ENCODE measurements at regions of chr9 and their contacts with region 1.

Region 1: GRCh38 chr9:127214421-127215267 is 49.9 kb upstream of the GARNL3 start:
- DNase-seq: peak in 1 of 2 donors; percentile 84
- ATAC-seq: no peak
- H3K4me3 ChIP-seq: no peak overlapping the region
- H3K27ac ChIP-seq: no peak overlapping the region
- H3K4me1 ChIP-seq: no peaks in the 10 kb centered on the region
- H3K27me3 ChIP-seq: no peaks in the 10 kb centered on the region

Region 2: DNA sequence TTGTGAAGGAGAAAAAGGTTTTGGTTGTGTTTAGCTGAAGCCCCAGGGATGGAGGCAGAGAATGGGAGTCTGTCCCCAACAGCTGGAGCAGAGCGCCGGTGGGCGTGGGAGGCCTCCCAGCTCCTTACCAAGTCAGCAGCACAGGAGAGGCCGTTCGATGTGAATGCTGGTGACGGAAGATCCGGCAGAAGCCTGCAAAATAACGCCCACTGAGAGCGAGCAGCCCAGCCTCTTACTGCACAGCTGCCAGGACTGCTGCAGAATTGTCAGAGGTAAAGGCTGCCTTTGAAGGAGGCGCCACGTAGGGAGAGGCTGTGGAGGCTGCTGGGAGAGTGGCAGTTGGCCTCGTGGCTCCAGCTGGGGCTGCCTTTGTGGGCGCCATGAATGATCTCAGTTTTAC is 118.4 kb before region 1 on chr9:
- intact Hi-C with region 1: no loop called
- DNase-seq: no peak
- ATAC-seq: no peak
- H3K4me3 ChIP-seq: no peak overlapping the region
- H3K27ac ChIP-seq: no peak overlapping the region
- H3K4me1 ChIP-seq: no peaks in the 10 kb centered on the region
- H3K27me3 ChIP-seq: no peaks in the 10 kb centered on the region

Region 3: DNA sequence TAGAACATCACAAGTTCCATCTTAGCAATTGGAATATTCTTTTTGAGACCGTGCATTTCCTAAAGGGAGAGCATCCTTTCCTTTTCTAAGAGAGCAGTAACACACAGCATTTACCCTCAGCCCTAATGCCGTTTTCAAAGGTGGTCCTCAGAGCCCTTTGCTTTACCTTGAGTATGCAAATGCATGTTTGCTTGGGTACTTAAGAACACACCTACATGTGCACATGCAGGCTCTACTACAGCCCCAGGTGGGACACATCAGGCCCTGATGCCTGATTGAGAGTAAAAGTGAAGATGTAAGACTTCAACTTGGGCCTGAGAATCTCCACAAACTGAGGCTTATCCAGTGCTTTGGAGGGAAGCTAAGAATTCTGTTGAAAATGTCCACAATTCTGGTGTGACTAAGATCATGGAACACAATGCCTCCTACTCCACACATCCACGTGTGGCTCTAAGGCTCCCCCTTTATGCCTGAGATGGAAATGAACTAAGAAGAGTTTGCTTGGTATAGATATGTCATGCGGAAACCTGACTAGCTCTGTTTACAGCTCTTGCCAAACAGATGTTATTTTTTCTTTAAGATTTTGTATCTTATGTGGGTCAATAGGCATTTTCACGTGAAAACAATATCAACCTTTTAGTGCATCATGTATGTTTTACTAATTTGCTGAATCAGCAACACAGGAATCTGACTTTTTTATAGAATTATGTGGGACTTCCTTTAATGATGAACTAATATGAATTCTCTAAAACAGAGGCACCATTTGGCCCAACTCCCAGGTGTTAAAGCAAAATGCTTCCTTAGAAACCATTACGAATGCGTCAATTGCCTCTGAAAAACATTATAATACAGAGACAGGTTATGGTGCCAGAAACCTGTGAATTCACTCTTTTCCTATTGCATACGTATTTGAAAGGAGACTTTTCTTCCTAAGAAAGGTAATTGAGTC is 133.5 kb after region 1 on chr9:
- intact Hi-C with region 1: loop called (anchors 5 kb)
- DNase-seq: no peak
- ATAC-seq: peak; percentile 71
- H3K4me3 ChIP-seq: no peak overlapping the region
- H3K27ac ChIP-seq: no peak overlapping the region
- H3K4me1 ChIP-seq: peaks cover 0 to 2% of the 10 kb centered on the region in 2 donors
- H3K27me3 ChIP-seq: no peaks in the 10 kb centered on the region

Region 4: GRCh38 chr9:127396808-127397497 is 182.3 kb after region 1 on chr9 and contains the start of gene SLC2A8:
- intact Hi-C with region 1: loop called (anchors 2 kb)
- DNase-seq: peak; percentile 99
- ATAC-seq: peak; percentile 98
- H3K4me3 ChIP-seq: peak within 1 kb of the TSS; percentile 58 to 66
- H3K27ac ChIP-seq: peak within 1 kb of the TSS; percentile 5 to 58
- H3K4me1 ChIP-seq: no peaks in the 10 kb centered on the region
- H3K27me3 ChIP-seq: no peaks in the 10 kb centered on the region
- total RNA-seq, gene SLC2A8: 15.3 to 21.0 TPM

Region 5: DNA sequence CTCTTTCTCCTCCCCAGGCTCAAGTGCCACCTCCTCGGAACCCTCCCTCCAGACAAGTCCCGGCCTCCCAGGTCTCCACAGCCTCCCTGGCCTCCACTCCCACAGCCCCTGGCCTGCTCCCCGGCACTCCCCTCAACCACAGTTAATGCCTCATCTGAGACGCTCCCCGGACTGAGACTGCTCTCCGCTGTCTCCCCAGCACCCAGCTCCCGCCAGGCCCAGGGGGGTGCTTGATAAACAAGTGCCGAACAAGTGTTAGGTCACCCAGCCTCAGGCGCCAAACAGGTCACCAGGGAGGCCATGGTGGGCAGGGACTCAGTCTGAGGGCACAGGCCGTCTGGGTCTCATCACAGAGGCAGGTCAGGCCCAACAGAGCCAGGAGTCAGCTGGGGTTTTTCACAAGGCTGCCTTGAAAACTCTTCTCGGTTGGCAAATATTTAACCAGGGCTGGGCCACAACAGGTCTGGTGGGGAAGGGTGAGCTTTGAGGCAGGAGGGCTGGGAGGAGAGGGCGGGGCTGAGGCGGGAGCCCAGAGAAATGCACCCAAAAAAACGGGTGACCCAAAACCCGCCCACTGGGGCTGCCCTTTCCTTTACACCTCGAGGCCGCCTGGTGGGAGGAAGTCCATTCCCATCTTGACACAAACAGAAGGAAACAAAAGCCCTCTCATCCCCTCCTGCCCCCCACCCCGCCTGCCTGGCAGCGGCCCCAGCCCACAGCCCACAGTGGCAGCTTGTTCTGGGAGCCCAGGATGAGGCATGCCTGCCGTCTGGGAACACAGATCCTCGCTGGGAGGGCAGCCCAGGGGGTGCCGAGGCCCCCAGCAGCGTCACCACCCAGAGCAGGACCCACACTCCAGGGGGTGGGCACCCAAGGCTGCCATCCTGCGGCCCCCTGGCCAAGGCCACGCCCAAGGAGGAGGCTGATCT is 330.8 kb after region 1 on chr9:
- intact Hi-C with region 1: no loop called
- DNase-seq: peak in 1 of 2 donors; percentile 80
- ATAC-seq: peak; percentile 3
- H3K4me3 ChIP-seq: no peak overlapping the region
- H3K27ac ChIP-seq: peak overlapping the region in 1 of 2 donors; percentile 36
- H3K4me1 ChIP-seq: no peaks in the 10 kb centered on the region
- H3K27me3 ChIP-seq: no peaks in the 10 kb centered on the region

Measured in aorta (tissue), 5 donors.